Posterior cingulate gyrus (tissue), 11 donors: ENCODE measurements at regions of chr5 and their contacts with region 1.

Region 1: DNA sequence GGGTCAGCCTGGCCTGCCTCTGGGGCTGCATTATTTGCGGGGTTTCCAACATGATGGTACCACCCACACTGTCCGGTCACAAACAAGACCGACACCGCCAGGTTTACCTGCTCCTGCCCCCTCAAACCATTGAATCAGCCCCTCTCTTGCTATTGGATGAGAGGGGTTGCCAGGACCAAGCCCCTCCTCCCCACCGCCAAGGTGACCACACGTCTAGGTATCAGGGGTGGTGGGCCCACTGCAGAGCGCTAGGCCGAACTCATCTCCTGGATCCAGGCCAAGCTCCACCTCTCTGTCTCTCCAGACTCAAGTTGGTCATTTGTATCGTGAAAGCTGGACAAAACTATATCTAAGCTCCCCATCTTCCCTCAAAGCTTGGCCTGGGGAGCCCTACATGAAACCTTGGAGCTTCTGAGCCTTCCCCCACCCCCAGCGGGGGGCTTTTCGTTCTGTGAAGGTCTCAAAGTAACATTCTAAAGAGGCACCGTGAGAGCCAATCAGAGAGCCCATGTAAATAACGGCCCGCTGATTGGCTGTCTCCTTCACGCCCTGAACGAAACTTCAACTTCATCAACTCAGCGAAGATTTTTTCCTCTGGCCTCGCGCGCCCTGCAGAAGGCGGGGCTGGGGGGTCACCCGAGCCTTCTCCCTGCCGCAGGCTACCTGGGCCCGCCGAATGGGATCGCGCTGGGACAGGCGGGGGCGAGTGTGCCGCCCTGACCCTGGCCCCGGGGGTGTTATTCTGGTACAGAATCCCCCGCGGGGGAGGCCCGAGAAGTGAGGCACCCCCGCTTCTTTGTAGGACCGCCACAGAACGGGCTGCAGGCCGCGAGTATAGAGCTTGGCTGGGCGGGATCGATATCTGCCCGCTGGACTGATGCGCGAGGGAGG is 49.6 kb upstream of the PSD2 start:
- DNase-seq: peak in 9 of 10 donors; percentile 58 to 96 (median 72)

Region 2: DNA sequence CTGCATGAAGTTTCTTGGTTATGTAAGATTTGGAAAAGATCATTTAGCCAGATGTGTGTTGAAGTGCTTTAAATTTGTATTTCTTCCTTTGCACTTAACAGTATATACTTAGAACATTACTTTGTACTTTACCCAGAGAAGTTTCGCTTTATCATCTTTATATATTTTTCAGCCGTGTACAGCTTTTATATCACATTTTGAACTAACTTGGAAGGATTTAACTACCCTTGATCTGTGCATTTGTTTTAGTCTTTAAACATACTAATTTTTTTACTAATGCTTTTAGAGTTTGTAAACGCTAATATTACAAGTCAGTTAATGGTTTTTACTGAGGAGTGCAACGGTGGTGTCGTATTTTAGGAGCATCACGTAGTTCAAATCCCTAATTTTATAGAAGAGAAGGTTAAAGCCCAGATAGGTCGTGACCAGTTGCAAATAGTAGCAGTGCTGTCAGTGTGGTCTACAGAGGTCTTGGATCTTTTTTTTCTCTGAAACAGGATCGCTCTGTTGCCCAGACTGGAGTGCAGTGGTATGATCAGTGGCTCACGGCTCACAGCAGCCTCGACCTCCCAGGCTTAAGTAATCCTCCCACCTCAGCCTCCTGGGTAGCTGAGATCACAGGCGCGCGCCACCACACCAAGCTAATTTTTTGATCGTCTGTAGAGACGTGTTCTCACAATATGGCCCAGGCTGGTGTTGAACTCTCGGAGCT is 450.5 kb before region 1 on chr5:
- intact Hi-C with region 1: no loop called
- DNase-seq: no peak

Region 3: GRCh38 chr5:139711067-139711905 is 34.8 kb before region 1 on chr5:
- intact Hi-C with region 1: loop called (anchors 5 kb)
- DNase-seq: peak in 8 of 10 donors; percentile 57 to 95 (median 70)